Right lobe of liver (tissue), 6 donors: ENCODE measurements at regions of chr4 and their contacts with region 1.

Region 1: DNA sequence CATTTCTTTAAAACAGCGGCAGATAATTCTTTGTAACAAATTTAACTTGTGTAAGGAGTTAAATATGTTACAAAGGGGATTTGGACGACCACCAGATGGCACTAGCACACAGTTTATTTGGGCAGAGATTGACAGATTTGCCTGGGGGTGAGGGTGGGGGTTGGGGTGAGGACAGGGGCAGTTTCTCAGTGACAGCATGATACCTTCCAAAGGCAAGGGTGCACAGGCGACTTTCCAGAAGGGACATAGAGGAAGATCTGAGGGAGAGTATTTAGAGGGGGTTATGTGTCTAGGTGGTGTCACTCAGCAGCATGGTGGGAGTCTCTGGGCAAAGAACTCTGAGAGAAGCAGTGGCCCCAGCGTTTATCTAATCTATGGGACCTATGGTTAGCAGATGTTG is 9.6 kb upstream of the TMA16 start:
- DNase-seq: no peak
- ATAC-seq: peak; percentile 53 to 68 (median 62)
- H3K4me3 ChIP-seq: no peak overlapping the region
- H3K27ac ChIP-seq: no peak overlapping the region
- H3K4me1 ChIP-seq: no peaks in the 10 kb centered on the region
- H3K27me3 ChIP-seq: no peaks in the 10 kb centered on the region
- CTCF ChIP-seq: peak; percentile 25 to 44 (median 29)
- POLR2A ChIP-seq: no peak

Region 2: GRCh38 chr4:163350672-163351071 is 134.2 kb before region 1 on chr4:
- intact Hi-C with region 1: no loop called
- DNase-seq: no peak
- ATAC-seq: no peak
- H3K4me3 ChIP-seq: no peak overlapping the region
- H3K27ac ChIP-seq: no peak overlapping the region
- H3K4me1 ChIP-seq: no peaks in the 10 kb centered on the region
- H3K27me3 ChIP-seq: no peaks in the 10 kb centered on the region
- CTCF ChIP-seq: no peak
- POLR2A ChIP-seq: no peak

Region 3: DNA sequence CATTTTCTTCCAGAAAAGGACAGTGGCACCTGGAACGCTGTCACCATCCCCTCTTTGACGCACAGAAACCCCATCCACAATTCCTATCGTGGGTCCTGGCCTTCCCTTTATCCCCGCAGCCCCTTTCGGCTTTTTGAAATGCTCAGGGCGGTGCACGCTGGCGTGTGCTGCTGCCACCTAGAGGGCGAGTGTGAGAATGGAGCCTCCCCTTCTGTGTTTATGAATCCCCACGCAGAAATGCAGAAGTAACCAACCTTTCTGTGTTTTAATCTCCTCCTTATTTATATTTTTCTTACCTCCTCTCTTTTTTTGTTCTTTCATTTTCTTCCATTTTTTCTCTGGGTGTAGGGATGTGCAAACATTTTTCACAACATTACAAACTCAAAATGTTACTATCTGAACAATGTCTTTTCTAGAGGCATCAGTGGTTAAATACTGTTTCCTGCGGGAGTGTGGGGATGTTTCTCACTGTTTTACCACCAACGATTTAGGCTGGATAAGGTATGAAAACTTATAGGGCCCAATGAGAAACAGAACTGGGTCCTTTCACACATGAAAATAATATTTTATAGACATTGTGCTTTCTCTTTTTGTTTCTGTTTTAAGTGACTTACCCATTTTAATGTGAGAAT is 59.6 kb after region 1 on chr4:
- intact Hi-C with region 1: loop called in 1 of 2 experiments (anchors 10 kb)
- DNase-seq: peak; percentile 53 to 67 (median 59)
- ATAC-seq: peak; percentile 90 to 93 (median 92)
- H3K4me3 ChIP-seq: peak overlapping the region in 1 of 3 donors; percentile 12
- H3K27ac ChIP-seq: no peak overlapping the region
- H3K4me1 ChIP-seq: no peaks in the 10 kb centered on the region
- H3K27me3 ChIP-seq: no peaks in the 10 kb centered on the region
- CTCF ChIP-seq: peak; percentile 59 to 96 (median 93)
- POLR2A ChIP-seq: no peak

Region 4: DNA sequence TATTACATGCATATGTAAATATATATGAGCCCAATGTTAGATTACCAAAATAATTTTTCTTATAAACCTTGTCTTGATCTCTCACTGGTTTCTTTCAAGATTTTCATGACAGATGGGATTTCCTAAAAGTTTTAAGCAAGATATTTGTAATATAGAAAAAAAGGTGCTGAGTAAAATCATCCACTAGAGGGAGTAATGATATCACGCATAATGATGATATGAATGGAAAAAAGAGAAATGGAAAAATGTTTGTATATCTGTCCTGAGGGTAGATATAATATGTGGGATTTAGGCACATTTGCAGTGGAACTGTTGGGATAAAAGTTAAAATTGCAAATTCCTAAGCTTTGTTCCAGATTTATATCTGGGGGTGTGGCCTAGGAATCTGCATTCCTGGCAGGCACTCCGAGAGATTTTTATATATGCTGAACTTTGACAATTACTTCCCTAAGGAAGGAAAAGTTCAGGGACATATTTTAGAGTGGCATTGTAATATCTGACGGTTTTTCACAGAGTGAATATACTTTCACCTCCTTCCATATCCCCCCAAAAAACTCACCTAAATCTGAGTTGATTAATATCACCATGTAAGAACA is 70.1 kb after region 1 on chr4:
- intact Hi-C with region 1: loop called in 1 of 2 experiments (anchors 5 kb)
- DNase-seq: no peak
- ATAC-seq: peak in 1 of 4 donors; percentile 23
- H3K4me3 ChIP-seq: no peak overlapping the region
- H3K27ac ChIP-seq: no peak overlapping the region
- H3K4me1 ChIP-seq: peaks cover 0 to 4% (median 0%) of the 10 kb centered on the region in 4 donors
- H3K27me3 ChIP-seq: no peaks in the 10 kb centered on the region
- CTCF ChIP-seq: peak; percentile 54 to 77 (median 73)
- POLR2A ChIP-seq: no peak

Region 5: DNA sequence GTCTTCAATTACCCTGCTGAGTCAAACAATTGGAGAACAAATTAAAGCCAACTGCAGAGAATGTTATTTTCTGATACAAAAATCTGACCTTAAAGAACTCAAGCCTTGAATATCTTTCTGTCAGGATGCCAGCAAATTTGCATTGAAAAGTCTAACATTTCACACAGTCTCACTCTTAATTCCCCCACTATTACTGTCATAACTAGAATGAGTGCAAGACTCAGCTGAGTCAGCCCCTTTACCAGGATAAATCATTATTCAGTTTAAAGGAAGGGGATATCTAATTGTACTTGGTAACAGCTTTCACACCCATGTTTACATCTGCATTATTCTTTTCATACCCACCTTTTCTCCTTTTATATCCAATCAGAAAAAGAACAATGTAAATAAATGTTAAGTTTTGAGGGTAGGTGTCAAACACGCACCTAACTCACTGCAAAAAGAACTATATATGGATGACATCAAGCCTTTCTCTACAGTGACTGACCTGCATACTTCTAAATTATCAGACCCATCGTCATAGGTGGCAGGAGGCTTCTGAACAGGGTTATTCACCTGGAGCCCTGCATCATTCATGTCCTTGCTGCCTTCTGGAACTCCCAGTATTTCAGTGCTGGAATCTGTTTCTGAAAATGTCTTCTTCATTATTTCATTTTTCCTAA is 127.0 kb after region 1 on chr4:
- intact Hi-C with region 1: no loop called
- DNase-seq: no peak
- ATAC-seq: no peak
- H3K4me3 ChIP-seq: peak overlapping the region in 2 of 3 donors; percentile 1 to 37
- H3K27ac ChIP-seq: peak overlapping the region in 2 of 3 donors; percentile 9 to 34
- H3K4me1 ChIP-seq: no peaks in the 10 kb centered on the region
- H3K27me3 ChIP-seq: no peaks in the 10 kb centered on the region
- CTCF ChIP-seq: no peak
- POLR2A ChIP-seq: no peak